ENCODE measurements at regions of chr2 and their contacts with region 1.

Region 1: DNA sequence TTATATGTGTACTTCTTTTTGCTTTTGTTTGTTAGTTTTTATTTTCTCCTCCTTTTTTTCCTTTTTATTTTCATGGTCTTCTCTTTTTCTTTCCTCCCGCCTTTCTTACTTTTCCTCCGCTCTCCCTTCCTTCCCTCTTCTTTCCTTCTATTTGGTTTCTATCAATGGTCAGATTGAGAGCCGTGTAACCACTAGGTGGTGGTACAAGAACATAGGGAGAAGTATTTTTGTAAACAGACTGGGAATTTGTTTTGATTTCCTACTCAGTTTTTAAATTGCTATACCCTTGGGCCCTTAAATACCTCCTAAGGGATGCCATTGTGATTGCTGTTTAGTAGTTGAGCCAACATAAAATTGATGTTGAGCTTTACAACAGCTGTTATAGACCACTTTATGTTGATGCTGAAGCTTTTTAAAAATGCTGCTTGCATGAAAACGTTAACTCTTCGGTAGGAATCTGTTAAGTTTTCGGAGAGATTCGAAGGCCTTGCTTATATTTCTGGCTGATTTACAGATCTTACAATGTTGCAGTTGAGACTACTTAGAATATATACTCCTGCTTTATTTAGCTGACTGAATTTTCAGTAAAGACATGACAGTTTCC is 124.2 kb downstream of the UBE2E3 start:
- DNase-seq: peak in 4 of 14 experiments; percentile 49 to 79 (median 75)
- ATAC-seq: peak; percentile 49
- H3K4me3 ChIP-seq: no peak overlapping the region
- H3K4me3 Mint-ChIP-seq: no peak overlapping the region
- H3K27ac ChIP-seq: no peak overlapping the region
- H3K27ac Mint-ChIP-seq: no peak overlapping the region
- H3K4me1 ChIP-seq: peaks cover 19% of the 10 kb centered on the region
- H3K4me1 Mint-ChIP-seq: peaks cover 43% of the 10 kb centered on the region
- H3K27me3 ChIP-seq: no peaks in the 10 kb centered on the region
- H3K27me3 Mint-ChIP-seq: no peaks in the 10 kb centered on the region
- CTCF ChIP-seq: peak; percentile 98

Region 2: GRCh38 chr2:181165199-181165868 is 60.7 kb after region 1 on chr2:
- CTCF ChIA-PET with region 1: interaction called, 4 read pairs
- POLR2A ChIA-PET with region 1: no interaction called
- intact Hi-C with region 1: loop called in 1 of 2 experiments (anchors 10 kb)
- DNase-seq: peak in 5 of 14 experiments; percentile 15 to 83 (median 61)
- ATAC-seq: peak; percentile 80
- H3K4me3 ChIP-seq: peak overlapping the region; percentile 24
- H3K4me3 Mint-ChIP-seq: peak overlapping the region; percentile 60
- H3K27ac ChIP-seq: peak overlapping the region; percentile 51 to 56
- H3K27ac Mint-ChIP-seq: peak overlapping the region; percentile 83
- H3K4me1 ChIP-seq: peaks cover 19% of the 10 kb centered on the region
- H3K4me1 Mint-ChIP-seq: peaks cover 56% of the 10 kb centered on the region
- H3K27me3 ChIP-seq: no peaks in the 10 kb centered on the region
- H3K27me3 Mint-ChIP-seq: no peaks in the 10 kb centered on the region
- CTCF ChIP-seq: no peak

Region 3: GRCh38 chr2:181281206-181281832 is 176.7 kb after region 1 on chr2:
- CTCF ChIA-PET with region 1: no interaction called
- POLR2A ChIA-PET with region 1: no interaction called
- intact Hi-C with region 1: loop called in 1 of 2 experiments (anchors 1 kb)
- DNase-seq: peak in 3 of 14 experiments; percentile 72 to 79 (median 77)
- ATAC-seq: peak; percentile 91
- H3K4me3 ChIP-seq: no peak overlapping the region
- H3K4me3 Mint-ChIP-seq: peak overlapping the region; percentile 31
- H3K27ac ChIP-seq: peak overlapping the region; percentile 43 to 63
- H3K27ac Mint-ChIP-seq: peak overlapping the region; percentile 78
- H3K4me1 ChIP-seq: peaks cover 5% of the 10 kb centered on the region
- H3K4me1 Mint-ChIP-seq: peaks cover 52% of the 10 kb centered on the region
- H3K27me3 ChIP-seq: no peaks in the 10 kb centered on the region
- H3K27me3 Mint-ChIP-seq: no peaks in the 10 kb centered on the region
- CTCF ChIP-seq: no peak

Region 4: GRCh38 chr2:181326661-181327060 is 222.0 kb after region 1 on chr2:
- CTCF ChIA-PET with region 1: no interaction called
- POLR2A ChIA-PET with region 1: no interaction called
- intact Hi-C with region 1: loop called in 1 of 2 experiments (anchors 1 kb)
- DNase-seq: no peak
- ATAC-seq: peak; percentile 34
- H3K4me3 ChIP-seq: no peak overlapping the region
- H3K4me3 Mint-ChIP-seq: no peak overlapping the region
- H3K27ac ChIP-seq: no peak overlapping the region
- H3K27ac Mint-ChIP-seq: no peak overlapping the region
- H3K4me1 ChIP-seq: no peaks in the 10 kb centered on the region
- H3K4me1 Mint-ChIP-seq: peaks cover 19% of the 10 kb centered on the region
- H3K27me3 ChIP-seq: no peaks in the 10 kb centered on the region
- H3K27me3 Mint-ChIP-seq: no peaks in the 10 kb centered on the region
- CTCF ChIP-seq: no peak

Region 5: DNA sequence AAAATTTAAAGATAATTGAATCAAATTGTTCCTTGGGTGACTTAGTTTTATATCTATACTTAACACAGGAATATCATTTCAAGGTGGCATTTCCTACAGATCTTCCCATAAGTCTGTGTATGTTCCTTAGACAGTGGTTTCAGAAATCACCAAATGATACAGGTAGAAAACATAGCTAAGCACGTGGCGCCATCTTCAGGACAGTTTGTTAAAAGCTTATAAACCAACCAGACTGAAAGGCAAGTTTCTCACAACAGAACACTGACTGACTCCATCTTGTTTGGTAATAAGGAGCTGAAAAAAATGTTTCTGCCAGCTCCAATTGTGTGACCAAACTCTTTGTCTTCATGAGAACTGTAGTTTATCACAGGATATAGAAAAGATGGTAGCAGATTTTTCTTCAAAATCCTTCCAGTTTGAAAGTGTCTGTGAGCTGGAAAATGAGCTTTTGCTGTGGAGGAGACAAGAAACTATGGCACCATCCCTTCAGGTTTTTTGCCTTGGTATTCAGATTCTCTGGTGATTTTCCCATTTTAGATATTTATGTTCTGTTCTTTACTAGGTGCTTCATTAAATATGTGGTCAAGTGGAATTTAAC is 610.5 kb after region 1 on chr2:
- CTCF ChIA-PET with region 1: no interaction called
- POLR2A ChIA-PET with region 1: no interaction called
- intact Hi-C with region 1: loop called in 1 of 2 experiments (anchors 5 kb)
- DNase-seq: peak; percentile 30 to 86 (median 60)
- ATAC-seq: peak; percentile 80
- H3K4me3 ChIP-seq: no peak overlapping the region
- H3K4me3 Mint-ChIP-seq: no peak overlapping the region
- H3K27ac ChIP-seq: no peak overlapping the region
- H3K27ac Mint-ChIP-seq: no peak overlapping the region
- H3K4me1 ChIP-seq: no peaks in the 10 kb centered on the region
- H3K4me1 Mint-ChIP-seq: no peaks in the 10 kb centered on the region
- H3K27me3 ChIP-seq: no peaks in the 10 kb centered on the region
- H3K27me3 Mint-ChIP-seq: no peaks in the 10 kb centered on the region
- CTCF ChIP-seq: peak; percentile 72